Activated CD8-positive, alpha-beta T cell treated with anti-CD3 and anti-CD28 coated beads, Interleukin-2, amount 10 ng/mL, durations not matched to agents 7 days and 5 days (primary cell): ENCODE measurements at regions of chr15 and their contacts with region 1.

Region 1: DNA sequence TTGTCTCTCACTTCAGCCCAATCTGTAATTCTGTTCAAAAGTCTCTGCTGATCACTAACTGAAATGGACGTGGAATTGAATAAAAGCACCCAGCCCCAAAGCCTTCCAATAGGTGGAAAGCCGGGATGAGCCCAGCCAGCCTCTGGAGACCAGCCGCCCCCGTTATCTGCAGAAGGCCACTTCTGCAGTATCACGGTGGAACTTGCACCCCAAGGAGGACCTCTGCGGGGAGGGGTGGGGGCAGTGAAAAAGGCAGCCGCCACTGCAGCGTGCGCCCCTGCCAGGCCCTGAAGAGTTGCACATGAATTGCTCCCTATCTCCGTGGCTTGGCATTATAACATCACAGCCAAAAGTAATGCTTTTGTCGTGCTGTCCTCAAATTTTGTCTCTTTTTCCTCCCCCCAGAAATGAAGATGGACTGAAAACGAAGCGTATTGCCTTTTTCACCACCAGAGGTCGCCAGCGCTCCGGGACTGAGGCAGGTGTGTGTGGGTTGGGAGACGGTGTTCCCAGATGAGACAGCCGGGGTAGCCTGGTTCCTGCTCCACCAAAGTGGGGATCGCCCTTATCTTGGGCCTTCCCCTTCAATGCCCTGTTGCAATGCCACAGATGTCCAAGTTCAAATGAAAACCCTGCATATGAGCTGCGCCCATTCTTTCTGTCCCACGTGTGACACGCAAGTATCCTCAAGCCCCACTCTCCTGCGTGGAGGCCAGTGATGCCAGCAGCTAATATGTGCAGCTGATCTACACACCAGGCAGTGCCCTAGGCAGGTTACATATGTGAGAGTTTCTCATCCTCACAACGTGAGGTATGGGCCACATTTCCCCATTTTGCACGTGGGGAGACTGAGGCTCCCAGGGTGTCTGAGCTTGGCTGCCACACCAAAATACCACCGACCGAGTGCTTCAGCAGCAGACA is 96.0 kb downstream of the LRRK1 start:
- DNase-seq: peak; percentile 78
- ATAC-seq: peak; percentile 71
- H3K4me3 Mint-ChIP-seq: no peak overlapping the region
- H3K27ac Mint-ChIP-seq: no peak overlapping the region
- H3K4me1 Mint-ChIP-seq: no peaks in the 10 kb centered on the region
- H3K27me3 Mint-ChIP-seq: peaks cover 7% of the 10 kb centered on the region

Region 2: DNA sequence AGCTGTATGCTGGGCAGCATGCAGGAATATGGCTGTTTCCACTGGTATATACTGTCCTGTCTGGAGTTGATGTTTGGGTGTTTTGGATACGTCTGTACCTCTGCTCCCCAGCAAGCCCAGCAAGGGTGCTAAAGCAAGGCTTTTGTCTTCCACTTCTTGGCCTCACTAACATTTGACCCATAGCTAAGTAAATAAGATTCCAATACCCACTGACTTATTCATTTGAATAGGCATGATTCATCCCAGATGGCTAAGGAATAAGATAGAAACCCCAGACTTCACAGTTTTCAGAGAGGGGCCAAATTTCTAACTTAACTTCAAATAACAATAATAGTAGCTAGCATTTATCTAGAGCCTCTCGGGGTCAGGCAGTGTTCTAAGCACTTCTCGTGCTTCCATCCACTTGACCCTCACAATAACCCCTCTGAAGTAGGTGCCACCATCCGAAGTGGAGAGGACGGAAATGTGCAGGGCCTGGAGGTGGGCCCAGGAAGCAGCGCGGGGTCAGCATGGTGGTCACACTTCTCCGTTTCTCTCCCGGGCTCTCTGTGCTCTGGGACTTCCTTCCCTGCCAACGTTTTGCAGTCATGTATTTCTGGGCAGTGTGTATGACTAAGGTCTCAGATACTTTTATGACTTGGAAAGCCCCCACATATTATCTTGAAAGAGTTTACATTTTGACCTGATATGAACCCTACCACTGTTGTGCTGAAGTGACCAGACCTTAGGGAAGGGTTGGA is 56.7 kb before region 1 on chr15:
- CTCF ChIA-PET with region 1: no interaction called
- POLR2A ChIA-PET with region 1: no interaction called
- DNase-seq: no peak
- ATAC-seq: no peak
- H3K4me3 Mint-ChIP-seq: no peak overlapping the region
- H3K27ac Mint-ChIP-seq: no peak overlapping the region
- H3K4me1 Mint-ChIP-seq: no peaks in the 10 kb centered on the region
- H3K27me3 Mint-ChIP-seq: peaks cover 12% of the 10 kb centered on the region

Region 3: DNA sequence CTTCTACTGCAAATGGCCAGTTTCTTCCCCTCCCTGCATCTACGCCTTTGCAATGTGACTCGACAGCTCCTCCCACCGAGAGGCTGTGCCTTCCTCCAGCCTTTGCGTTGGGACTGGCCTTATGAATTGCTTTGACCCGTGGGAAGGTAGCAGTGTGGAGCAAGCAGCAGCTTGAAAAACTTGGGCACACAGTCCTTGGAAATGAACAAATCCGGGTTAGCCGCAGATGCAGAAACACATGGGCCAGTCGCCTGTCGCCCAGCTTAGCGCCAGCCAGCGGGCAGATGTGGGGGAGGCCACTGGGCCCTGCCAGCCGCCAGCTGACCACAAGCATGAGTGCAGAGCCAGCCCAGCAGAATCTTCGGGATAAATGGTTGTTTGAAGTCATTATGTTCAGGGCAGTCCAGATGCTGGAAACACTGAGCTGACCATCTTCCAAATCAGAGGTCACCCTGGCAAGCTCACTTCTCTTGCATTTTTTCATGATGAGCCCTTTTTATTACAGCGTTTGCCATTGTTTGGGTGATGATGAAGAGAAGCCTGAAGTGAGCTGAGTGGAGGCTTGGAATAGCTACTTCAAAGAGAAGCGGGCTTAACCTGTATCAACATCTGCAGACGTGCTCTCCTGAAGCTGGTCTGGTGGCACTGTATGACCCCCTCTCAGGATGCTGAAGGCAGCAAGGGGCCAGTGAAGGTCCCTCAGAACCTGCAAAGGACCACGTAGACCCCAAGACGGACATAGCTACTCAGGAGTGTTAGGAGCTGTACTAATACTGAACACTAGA is 252.3 kb after region 1 on chr15:
- CTCF ChIA-PET with region 1: interaction called, 12 read pairs
- POLR2A ChIA-PET with region 1: no interaction called
- DNase-seq: no peak
- ATAC-seq: no peak
- H3K4me3 Mint-ChIP-seq: no peak overlapping the region
- H3K27ac Mint-ChIP-seq: no peak overlapping the region
- H3K4me1 Mint-ChIP-seq: peaks cover 6% of the 10 kb centered on the region
- H3K27me3 Mint-ChIP-seq: no peaks in the 10 kb centered on the region